ENCODE measurements at regions of chr3 and their contacts with region 1.

Region 1: DNA sequence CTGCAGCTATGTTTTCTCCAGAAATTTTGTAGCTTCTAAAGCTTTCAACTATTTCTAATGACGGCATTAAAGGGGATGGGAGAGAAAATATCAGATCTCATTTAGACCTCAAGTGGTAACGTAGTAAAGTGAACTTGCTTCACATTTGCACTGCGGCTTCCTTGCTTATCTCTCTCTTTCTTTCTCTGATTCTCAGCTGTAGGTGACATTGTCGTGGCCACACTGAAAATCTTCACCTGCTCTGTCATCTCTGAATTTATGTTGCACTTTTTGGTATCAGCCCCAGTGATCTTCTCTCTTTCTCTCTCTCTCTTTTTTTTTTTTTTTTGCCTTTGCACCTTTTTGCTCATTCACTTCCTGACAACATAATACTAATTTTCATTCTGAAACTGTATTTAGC is 254.1 kb upstream of the SATB1 start:
- DNase-seq: peak; percentile 87
- H3K4me3 Mint-ChIP-seq: peak overlapping the region; percentile 62
- H3K27ac Mint-ChIP-seq: peak overlapping the region; percentile 78
- H3K4me1 Mint-ChIP-seq: peaks cover 70% of the 10 kb centered on the region
- H3K27me3 Mint-ChIP-seq: no peaks in the 10 kb centered on the region

Region 2: GRCh38 chr3:18649666-18650363 is 29.4 kb before region 1 on chr3:
- intact Hi-C with region 1: loop called (anchors 1 kb)
- DNase-seq: peak; percentile 89
- H3K4me3 Mint-ChIP-seq: peak overlapping the region; percentile 61
- H3K27ac Mint-ChIP-seq: peak overlapping the region; percentile 93
- H3K4me1 Mint-ChIP-seq: peaks cover 73% of the 10 kb centered on the region
- H3K27me3 Mint-ChIP-seq: no peaks in the 10 kb centered on the region

Region 3: GRCh38 chr3:18660059-18660458 is 19.2 kb before region 1 on chr3:
- intact Hi-C with region 1: loop called (anchors 1 kb)
- DNase-seq: no peak
- H3K4me3 Mint-ChIP-seq: no peak overlapping the region
- H3K27ac Mint-ChIP-seq: no peak overlapping the region
- H3K4me1 Mint-ChIP-seq: peaks cover 53% of the 10 kb centered on the region
- H3K27me3 Mint-ChIP-seq: no peaks in the 10 kb centered on the region

Region 4: DNA sequence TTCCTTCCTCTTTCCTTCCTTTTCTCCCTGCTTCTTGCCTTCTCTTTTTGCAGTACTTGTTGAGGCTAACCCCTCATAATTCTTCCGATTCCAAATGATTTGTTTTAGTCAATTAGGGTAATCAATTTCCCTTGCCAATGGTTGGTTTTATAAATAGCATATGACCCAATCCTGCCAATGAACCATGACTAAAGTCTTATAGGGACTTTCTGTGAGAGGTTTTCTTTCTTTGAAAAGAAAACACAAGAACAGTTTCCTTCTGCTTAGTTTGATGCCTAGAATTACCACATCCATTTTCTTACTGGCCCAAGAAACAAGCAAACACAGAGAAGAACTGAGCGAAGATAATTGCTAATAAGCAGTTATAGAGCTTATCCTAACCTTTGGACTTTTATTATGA is 38.4 kb after region 1 on chr3:
- intact Hi-C with region 1: loop called (anchors 1 kb)
- DNase-seq: peak; percentile 64
- H3K4me3 Mint-ChIP-seq: peak overlapping the region; percentile 56
- H3K27ac Mint-ChIP-seq: peak overlapping the region; percentile 95
- H3K4me1 Mint-ChIP-seq: peaks cover 56% of the 10 kb centered on the region
- H3K27me3 Mint-ChIP-seq: no peaks in the 10 kb centered on the region

Region 5: DNA sequence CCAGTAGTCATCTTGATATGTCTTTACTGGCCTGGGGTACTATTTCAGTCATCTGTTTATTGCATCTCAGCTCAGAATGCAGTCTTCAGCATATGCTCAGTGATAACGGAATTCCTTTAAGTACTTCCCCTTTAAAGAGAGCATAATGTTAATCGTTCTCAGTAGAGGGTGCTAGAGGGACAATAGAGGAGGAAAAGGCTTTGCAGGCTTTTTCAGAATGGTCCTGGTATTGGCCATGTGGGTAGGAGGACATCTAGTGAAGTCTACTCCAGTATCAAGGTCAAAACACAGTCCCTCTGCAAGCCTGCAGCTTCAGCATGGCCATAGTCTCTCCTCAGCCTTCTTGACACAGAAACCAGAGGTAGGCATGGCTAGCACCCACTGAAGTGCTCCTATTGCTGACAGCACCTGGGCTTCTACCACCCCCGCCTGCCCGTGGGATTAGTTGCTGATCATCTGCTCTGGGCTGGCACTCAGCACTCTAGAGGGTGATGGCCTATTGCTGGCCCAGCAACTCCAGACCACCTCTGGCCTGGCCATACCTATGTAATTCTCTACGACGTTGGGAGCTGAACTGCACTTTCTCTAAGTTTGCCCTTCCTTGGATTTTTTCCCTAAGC is 534.5 kb after region 1 on chr3:
- intact Hi-C with region 1: no loop called
- DNase-seq: no peak
- H3K4me3 Mint-ChIP-seq: no peak overlapping the region
- H3K27ac Mint-ChIP-seq: no peak overlapping the region
- H3K4me1 Mint-ChIP-seq: no peaks in the 10 kb centered on the region
- H3K27me3 Mint-ChIP-seq: no peaks in the 10 kb centered on the region